Activated T-helper 1 cell treated with anti-CD3 and anti-CD28 coated beads, Interleukin-12 subunit alpha, Interleukin-12 subunit beta, Interleukin-2, Interleukin-4 antibody, amounts not matched to agents 30 ng/mL and 10 ng/mL and 1 ng/mL, durations not matched to agents 14 hours and 24 hours and 36 hours (primary cell): ENCODE measurements at regions of chr22 and their contacts with region 1.

Region 1: GRCh38 chr22:17638432-17639246 is at the start of gene BCL2L13:
- DNase-seq: peak; percentile 88
- H3K4me3 Mint-ChIP-seq: peak within 1 kb of the TSS; percentile 94
- H3K27ac Mint-ChIP-seq: peak within 1 kb of the TSS; percentile 95
- H3K4me1 Mint-ChIP-seq: peaks cover 29% of the 10 kb centered on the region
- H3K27me3 Mint-ChIP-seq: no peaks in the 10 kb centered on the region
- total RNA-seq, gene BCL2L13: 34.6 and 35.9 TPM in 2 replicates

Region 2: GRCh38 chr22:17628304-17629166 is 10.1 kb before region 1 on chr22 and contains the start of gene ATP6V1E1:
- intact Hi-C with region 1: loop called (anchors 1 kb)
- DNase-seq: peak; percentile 95
- H3K4me3 Mint-ChIP-seq: peak within 1 kb of the TSS; percentile 94
- H3K27ac Mint-ChIP-seq: peak within 1 kb of the TSS; percentile 85
- H3K4me1 Mint-ChIP-seq: peaks cover 21% of the 10 kb centered on the region
- H3K27me3 Mint-ChIP-seq: peaks cover 5% of the 10 kb centered on the region
- total RNA-seq, gene ATP6V1E1: 120 and 128 TPM in 2 replicates

Region 3: GRCh38 chr22:17706018-17706900 is 67.6 kb after region 1 on chr22:
- intact Hi-C with region 1: loop called (anchors 2 kb)
- DNase-seq: peak; percentile 21
- H3K4me3 Mint-ChIP-seq: peak overlapping the region; percentile 60
- H3K27ac Mint-ChIP-seq: peak overlapping the region; percentile 75
- H3K4me1 Mint-ChIP-seq: peaks cover 19% of the 10 kb centered on the region
- H3K27me3 Mint-ChIP-seq: no peaks in the 10 kb centered on the region

Region 4: GRCh38 chr22:17726464-17727246 is 88.0 kb after region 1 on chr22:
- intact Hi-C with region 1: no loop called
- DNase-seq: no peak
- H3K4me3 Mint-ChIP-seq: no peak overlapping the region
- H3K27ac Mint-ChIP-seq: no peak overlapping the region
- H3K4me1 Mint-ChIP-seq: peaks cover 10% of the 10 kb centered on the region
- H3K27me3 Mint-ChIP-seq: no peaks in the 10 kb centered on the region

Region 5: DNA sequence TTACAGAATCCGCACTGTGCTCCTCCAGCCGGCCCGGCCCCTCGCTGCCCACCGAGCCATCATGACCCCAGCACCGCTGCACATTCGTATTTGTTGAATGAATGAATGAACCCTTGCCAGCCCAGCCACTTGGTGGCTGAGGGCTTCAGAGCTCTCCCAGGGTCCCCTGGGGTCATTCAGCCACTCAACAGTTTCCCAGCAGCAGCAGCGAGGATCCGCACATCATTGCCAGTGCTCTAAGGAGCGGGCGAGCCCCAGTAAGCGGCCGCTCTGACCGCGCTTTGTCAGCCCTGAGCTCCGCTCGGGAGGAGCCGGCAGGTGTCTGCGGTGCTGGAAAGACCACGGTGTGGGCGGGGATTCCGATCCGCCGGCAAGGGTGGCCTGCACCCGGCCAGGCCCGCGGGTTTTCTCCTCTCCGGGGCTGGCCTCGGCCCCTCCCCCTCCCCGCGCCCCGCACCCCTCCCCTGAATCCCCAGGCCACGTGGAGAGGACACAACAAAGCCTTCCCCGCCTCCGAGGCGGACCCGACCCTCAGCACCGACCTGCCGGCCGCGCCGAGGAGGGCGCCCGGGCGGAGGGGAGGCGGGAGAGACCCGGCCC is 135.1 kb after region 1 on chr22:
- intact Hi-C with region 1: loop called (anchors 2 kb)
- DNase-seq: peak; percentile 67
- H3K4me3 Mint-ChIP-seq: peak overlapping the region; percentile 79
- H3K27ac Mint-ChIP-seq: peak overlapping the region; percentile 65
- H3K4me1 Mint-ChIP-seq: peaks cover 63% of the 10 kb centered on the region
- H3K27me3 Mint-ChIP-seq: peaks cover 14% of the 10 kb centered on the region

Region 6: GRCh38 chr22:17876306-17876831 is 237.7 kb after region 1 on chr22:
- intact Hi-C with region 1: no loop called
- DNase-seq: no peak
- H3K4me3 Mint-ChIP-seq: no peak overlapping the region
- H3K27ac Mint-ChIP-seq: no peak overlapping the region
- H3K4me1 Mint-ChIP-seq: no peaks in the 10 kb centered on the region
- H3K27me3 Mint-ChIP-seq: no peaks in the 10 kb centered on the region